IMR-90 (cell line): ENCODE measurements at regions of chr1 and their contacts with region 1.

Region 1: GRCh38 chr1:59150577-59151391 is 146.1 kb upstream of the FGGY start:
- DNase-seq: peak; percentile 100
- ATAC-seq: peak; percentile 94
- H3K4me3 ChIP-seq: peak overlapping the region; percentile 23; the same call in 1 of the 2 replicates
- H3K27ac ChIP-seq: peak overlapping the region; percentile 94
- H3K4me1 ChIP-seq: peaks cover 24% of the 10 kb centered on the region
- H3K27me3 ChIP-seq: no peaks in the 10 kb centered on the region
- CTCF ChIP-seq: 0 out of 2 replicates have a peak, but pooled peaks have one; percentile 5
- POLR2A ChIP-seq: no peak
- RAD21 ChIP-seq: no peak; the same call in 1 of the 2 replicates

Region 2: GRCh38 chr1:58816072-58816746 is 334.6 kb before region 1 on chr1:
- CTCF ChIA-PET with region 1: no interaction called
- POLR2A ChIA-PET with region 1: no interaction called
- dilution Hi-C with region 1: no loop called
- in situ Hi-C with region 1: loop called (anchors 10 kb)
- intact Hi-C with region 1: no loop called
- DNase-seq: peak; percentile 89
- ATAC-seq: peak; percentile 69
- H3K4me3 ChIP-seq: peak overlapping the region; percentile 49
- H3K27ac ChIP-seq: peak overlapping the region; percentile 97
- H3K4me1 ChIP-seq: peaks cover 16% of the 10 kb centered on the region
- H3K27me3 ChIP-seq: no peaks in the 10 kb centered on the region
- CTCF ChIP-seq: 0 out of 2 replicates have a peak, but pooled peaks have one; percentile 10
- POLR2A ChIP-seq: no peak
- RAD21 ChIP-seq: no peak; the same call in 1 of the 2 replicates

Region 3: DNA sequence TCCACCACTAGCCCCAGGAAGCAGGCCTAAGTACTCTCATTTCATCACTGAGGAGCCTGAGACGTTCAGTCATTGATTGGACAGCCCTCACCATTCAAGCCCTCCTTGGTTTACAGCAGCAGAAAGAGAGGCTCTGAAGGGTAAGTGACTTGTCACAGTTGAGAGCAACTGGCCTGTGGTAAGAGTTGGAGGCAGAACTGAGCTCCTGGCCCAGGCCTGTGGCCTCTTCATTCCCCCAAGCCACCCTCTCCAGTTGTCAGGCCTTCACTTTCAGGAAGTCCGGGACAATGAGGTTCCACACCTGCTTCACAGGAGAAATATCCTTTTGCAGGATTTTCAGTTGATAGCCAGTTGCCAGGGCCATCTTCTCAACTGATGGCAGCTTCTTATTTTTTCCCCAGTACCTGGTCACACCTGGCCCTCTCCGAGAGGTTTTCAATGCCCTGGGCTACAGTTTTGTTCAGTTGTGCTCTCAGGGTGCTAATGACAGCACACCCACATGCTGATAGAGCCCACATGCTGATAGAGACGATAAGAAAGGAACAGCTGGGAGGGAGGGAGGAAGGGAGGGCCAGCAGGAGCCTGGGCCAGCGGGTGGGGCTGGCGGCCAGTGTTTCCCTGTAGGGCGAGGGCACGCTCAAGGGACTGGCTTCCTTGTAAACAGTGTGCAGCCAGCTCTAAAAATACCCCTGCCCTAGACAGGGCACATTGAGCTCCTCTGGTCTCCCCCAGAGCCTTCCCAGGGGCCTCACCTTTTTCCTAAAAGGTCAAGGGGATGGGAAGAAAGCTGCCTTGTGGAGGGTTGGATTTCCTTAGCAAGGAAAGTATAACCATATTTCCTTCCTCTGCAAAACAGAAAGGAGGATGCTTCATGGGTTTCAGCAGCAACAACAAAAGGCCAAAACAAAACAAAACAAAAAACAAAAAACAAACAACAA is 254.3 kb before region 1 on chr1:
- CTCF ChIA-PET with region 1: no interaction called
- POLR2A ChIA-PET with region 1: no interaction called
- dilution Hi-C with region 1: no loop called
- in situ Hi-C with region 1: no loop called
- intact Hi-C with region 1: no loop called
- DNase-seq: no peak
- ATAC-seq: peak; percentile 13; the same call in 1 of the 2 replicates
- H3K4me3 ChIP-seq: no peak overlapping the region
- H3K27ac ChIP-seq: no peak overlapping the region
- H3K4me1 ChIP-seq: peaks cover 18% of the 10 kb centered on the region
- H3K27me3 ChIP-seq: no peaks in the 10 kb centered on the region
- CTCF ChIP-seq: no peak
- POLR2A ChIP-seq: no peak
- RAD21 ChIP-seq: no peak

Region 4: DNA sequence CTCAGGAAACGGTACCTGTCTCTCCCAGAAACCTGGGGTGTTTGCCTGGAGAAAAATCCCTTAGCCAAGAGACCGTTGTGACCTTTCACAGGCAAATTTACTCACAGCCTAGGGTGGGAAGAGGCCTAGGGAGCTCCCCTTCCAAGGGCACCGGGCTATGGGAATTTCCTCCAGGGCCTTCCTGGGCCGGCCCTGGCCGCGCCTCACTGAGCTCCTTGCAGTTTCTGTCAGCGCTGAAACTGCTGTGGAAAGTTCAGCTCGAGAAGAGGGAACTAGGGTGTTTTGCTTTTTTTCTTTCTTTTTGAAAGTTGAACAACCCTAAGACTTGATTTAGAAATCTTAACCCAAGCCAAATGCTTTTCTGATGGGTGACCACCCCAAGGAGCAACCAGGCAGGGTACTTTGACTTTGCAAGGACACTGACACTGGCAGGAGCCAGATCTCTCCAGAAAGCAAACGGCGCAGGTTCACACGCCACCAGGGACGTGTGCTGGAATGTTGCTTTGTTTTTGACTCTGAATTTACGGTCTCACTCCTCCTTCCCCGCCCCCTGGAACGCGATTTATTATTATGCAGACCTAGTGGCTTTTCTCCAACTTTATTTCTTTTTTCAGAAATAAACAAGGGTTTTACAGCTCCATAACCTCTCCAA is 137.4 kb before region 1 on chr1:
- CTCF ChIA-PET with region 1: no interaction called
- POLR2A ChIA-PET with region 1: no interaction called
- dilution Hi-C with region 1: no loop called
- in situ Hi-C with region 1: no loop called
- intact Hi-C with region 1: loop called (anchors 10 kb)
- DNase-seq: peak; percentile 36
- ATAC-seq: peak; percentile 49
- H3K4me3 ChIP-seq: peak overlapping the region; percentile 6; the same call in 1 of the 2 replicates
- H3K27ac ChIP-seq: peak overlapping the region; percentile 63
- H3K4me1 ChIP-seq: peaks cover 20% of the 10 kb centered on the region
- H3K27me3 ChIP-seq: no peaks in the 10 kb centered on the region
- CTCF ChIP-seq: no peak
- POLR2A ChIP-seq: no peak
- RAD21 ChIP-seq: no peak

Region 5: GRCh38 chr1:59296358-59297256 is 145.8 kb after region 1 on chr1 and contains the start of gene FGGY:
- CTCF ChIA-PET with region 1: no interaction called
- POLR2A ChIA-PET with region 1: interaction called, 3 read pairs
- dilution Hi-C with region 1: no loop called
- in situ Hi-C with region 1: no loop called
- intact Hi-C with region 1: loop called (anchors 2 kb)
- DNase-seq: peak; percentile 98
- ATAC-seq: peak; percentile 93
- H3K4me3 ChIP-seq: peak within 1 kb of the TSS; percentile 74
- H3K27ac ChIP-seq: peak within 1 kb of the TSS; percentile 99
- H3K4me1 ChIP-seq: peaks cover 6% of the 10 kb centered on the region
- H3K27me3 ChIP-seq: no peaks in the 10 kb centered on the region
- CTCF ChIP-seq: no peak
- POLR2A ChIP-seq: peak; percentile 84
- RAD21 ChIP-seq: peak; percentile 29; the same call in 1 of the 2 replicates
- total RNA-seq, gene FGGY: 12.8 and 14.0 TPM in 2 replicates